Activated naive CD4-positive, alpha-beta T cell treated with anti-CD3 and anti-CD28 coated beads for 36 hours (primary cell): ENCODE measurements at regions of chr11 and their contacts with region 1.

Region 1: DNA sequence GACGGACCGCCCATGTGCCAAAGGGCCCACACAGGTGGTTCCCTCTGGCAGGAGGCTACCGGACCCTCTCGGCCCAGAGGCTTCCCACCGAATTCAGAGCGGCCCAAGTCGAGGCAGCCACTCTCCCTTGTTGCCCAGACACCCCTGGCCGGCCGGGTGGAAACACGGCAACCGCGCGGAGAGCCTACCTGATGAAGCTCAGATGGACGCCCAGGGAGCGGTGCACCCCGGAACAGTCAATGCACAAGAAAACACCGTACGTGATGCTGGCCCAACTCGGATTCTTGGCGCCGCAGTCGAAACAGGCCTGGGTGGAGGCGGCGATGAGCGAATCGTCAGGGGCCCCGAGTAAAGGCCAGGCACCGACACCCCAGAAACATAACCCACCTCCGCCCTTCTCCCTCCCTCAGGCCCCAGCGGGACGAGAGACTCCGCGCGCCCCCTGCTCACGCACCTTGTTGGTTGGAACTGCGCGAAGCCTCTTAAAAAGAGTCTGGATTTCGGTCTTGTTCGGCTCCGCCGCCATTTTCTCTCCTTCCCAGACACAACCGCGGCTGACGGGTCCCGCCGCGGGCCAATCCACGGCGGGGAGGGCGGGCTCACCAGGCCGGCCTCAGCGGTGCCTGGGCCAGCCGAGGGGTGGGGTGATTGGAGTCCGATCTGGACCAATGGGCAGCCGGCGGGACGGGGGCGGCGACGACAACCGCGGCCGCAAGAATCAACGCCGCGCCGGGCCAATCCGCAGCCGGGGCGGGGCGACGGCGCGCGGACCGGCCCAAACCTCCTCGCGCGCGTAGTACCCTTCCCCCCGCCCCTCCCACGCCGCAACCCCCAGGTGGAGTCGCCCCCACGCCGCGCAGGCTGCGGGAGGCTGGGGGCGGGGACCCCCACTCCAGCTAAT is at the start of gene ARFGAP2:
- DNase-seq: peak; percentile 97
- H3K4me3 Mint-ChIP-seq: peak within 1 kb of the TSS; percentile 97
- H3K27ac Mint-ChIP-seq: peak within 1 kb of the TSS; percentile 99
- H3K4me1 Mint-ChIP-seq: peaks cover 41% of the 10 kb centered on the region
- H3K27me3 Mint-ChIP-seq: no peaks in the 10 kb centered on the region
- total RNA-seq, gene ARFGAP2: 75.1 to 78.7 TPM

Region 2: GRCh38 chr11:46845740-46846509 is 330.7 kb before region 1 on chr11 and contains the start of gene CKAP5:
- CTCF ChIA-PET with region 1: no interaction called
- intact Hi-C with region 1: loop called (anchors 1 kb)
- DNase-seq: peak; percentile 91
- H3K4me3 Mint-ChIP-seq: peak within 1 kb of the TSS; percentile 95
- H3K27ac Mint-ChIP-seq: peak within 1 kb of the TSS; percentile 91
- H3K4me1 Mint-ChIP-seq: peaks cover 33% of the 10 kb centered on the region
- H3K27me3 Mint-ChIP-seq: no peaks in the 10 kb centered on the region
- total RNA-seq, gene CKAP5: 205 to 216 TPM

Region 3: DNA sequence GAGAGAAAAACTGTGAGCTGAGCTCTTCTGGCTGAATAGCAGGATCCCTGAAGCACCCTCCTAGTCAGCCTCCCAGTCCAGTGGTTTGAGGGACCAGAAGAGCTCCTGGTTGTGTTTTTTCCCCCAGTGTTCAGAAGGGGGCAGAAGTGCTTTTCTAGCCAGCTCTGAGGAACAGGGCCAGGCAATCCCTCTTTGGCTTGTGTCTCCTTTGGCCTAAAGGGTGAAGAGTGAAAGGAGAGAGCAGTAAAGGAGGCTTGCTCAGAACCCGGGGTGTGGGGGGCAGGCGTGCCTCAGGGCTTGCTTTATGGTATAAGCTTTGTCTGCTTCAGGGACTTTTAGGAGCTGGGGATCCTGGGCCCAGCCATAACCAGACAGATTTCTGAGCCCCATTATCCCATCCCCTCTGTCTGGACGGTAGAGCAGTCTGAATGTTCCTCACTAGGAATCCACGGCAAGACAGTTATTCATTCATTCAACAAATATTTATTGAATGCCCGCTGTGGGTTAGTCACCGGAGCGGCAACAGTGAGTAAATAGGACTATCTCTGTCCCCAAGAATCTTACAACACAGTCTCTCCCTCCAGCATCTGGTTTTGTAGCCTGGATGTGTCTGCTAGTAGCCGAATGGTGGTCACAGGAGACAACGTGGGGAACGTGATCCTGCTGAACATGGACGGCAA is 57.6 kb after region 1 on chr11:
- CTCF ChIA-PET with region 1: interaction called, 15 read pairs
- intact Hi-C with region 1: loop called (anchors 1 kb)
- DNase-seq: peak; percentile 38
- H3K4me3 Mint-ChIP-seq: peak overlapping the region; percentile 3
- H3K27ac Mint-ChIP-seq: peak overlapping the region; percentile 77
- H3K4me1 Mint-ChIP-seq: peaks cover 30% of the 10 kb centered on the region
- H3K27me3 Mint-ChIP-seq: no peaks in the 10 kb centered on the region

Region 4: DNA sequence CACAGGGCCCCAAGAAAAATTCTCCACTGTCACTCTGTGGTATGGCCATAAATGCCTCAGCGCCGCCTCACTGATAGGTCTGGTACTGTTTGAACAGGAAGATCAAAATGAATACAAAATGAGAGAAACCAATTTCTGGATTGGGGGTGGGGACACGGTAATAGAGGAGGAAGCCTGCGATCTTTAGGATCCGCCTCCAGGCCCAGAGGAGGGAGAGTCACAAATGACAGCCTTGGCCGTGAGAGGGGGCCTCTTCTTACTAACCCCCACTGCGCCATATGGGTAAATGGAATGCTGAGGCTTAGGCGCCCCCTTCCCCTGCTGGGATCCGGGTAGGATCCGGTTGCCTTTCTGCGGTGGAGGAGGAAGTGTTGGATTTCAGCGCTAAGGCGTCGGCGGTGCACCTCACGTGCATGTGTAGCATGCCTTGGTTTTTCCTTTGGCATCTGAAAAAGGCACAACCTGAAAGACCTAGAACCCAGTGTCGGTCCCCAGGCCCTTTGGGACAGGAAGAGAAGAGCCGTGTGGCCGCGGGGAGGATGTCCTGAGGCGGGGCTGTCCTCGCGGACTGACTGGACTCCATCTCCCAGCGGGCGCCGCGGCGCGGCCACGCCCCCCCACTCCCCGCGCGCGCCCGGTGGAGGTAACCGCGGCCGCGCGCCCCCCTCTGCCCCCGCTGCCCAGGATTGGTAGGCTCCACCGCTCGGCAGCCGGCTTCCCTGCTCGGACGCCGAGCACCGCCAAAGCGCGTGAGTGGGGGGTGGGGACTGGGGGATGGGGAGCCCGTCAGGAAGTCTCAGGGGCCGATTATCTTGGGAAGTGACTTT is 92.6 kb after region 1 on chr11:
- CTCF ChIA-PET with region 1: interaction called, 4 read pairs
- intact Hi-C with region 1: loop called (anchors 1 kb)
- DNase-seq: peak; percentile 91
- H3K4me3 Mint-ChIP-seq: peak overlapping the region; percentile 85
- H3K27ac Mint-ChIP-seq: peak overlapping the region; percentile 98
- H3K4me1 Mint-ChIP-seq: peaks cover 55% of the 10 kb centered on the region
- H3K27me3 Mint-ChIP-seq: no peaks in the 10 kb centered on the region

Region 5: DNA sequence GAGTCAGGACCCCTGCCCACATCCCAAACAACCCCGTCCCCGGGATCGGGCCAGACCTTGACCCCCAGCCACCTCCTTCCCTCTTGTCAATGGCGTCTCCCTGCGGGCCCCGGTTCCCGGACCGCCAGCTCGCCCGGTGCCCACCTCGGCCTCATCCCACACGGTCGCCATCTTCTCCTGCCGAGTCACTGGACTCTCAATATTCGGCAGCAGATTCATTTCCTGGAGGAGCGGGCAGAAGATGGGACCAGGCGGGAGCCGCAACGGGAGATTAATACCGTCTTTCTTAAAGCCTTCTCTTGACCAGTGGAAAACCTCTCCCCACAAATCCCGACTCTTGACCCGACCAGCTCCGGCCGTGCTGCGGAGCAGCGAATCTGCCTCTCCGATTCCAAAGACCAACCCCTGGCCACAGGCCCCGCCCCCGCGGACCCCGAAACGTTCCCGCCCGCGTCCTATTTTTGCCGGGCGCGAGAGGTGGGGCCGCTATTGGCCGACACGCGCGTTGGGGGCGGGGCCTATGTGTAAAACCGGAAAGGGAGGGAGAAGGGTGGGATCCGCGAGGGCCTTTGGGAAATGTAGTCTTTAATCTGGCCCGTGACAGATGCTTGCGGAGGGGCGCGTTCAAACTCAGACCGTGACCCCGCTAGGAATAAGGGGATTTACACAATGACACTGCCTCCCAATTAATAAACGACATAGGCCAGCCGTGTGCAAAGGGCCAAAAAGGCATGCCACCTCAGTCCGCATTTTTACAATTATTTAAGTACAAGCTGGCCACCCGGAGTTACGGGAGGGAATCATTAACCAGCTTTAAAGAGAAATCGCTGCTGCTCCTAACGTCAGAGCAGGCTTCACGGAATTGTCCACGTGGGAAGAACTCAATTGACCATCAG is 249.7 kb after region 1 on chr11 and contains the start of gene PSMC3:
- CTCF ChIA-PET with region 1: no interaction called
- intact Hi-C with region 1: loop called (anchors 1 kb)
- DNase-seq: peak; percentile 99
- H3K4me3 Mint-ChIP-seq: peak within 1 kb of the TSS; percentile 98
- H3K27ac Mint-ChIP-seq: peak within 1 kb of the TSS; percentile 98
- H3K4me1 Mint-ChIP-seq: peaks cover 26% of the 10 kb centered on the region
- H3K27me3 Mint-ChIP-seq: no peaks in the 10 kb centered on the region
- total RNA-seq, gene PSMC3: 127 to 129 TPM

Region 6: DNA sequence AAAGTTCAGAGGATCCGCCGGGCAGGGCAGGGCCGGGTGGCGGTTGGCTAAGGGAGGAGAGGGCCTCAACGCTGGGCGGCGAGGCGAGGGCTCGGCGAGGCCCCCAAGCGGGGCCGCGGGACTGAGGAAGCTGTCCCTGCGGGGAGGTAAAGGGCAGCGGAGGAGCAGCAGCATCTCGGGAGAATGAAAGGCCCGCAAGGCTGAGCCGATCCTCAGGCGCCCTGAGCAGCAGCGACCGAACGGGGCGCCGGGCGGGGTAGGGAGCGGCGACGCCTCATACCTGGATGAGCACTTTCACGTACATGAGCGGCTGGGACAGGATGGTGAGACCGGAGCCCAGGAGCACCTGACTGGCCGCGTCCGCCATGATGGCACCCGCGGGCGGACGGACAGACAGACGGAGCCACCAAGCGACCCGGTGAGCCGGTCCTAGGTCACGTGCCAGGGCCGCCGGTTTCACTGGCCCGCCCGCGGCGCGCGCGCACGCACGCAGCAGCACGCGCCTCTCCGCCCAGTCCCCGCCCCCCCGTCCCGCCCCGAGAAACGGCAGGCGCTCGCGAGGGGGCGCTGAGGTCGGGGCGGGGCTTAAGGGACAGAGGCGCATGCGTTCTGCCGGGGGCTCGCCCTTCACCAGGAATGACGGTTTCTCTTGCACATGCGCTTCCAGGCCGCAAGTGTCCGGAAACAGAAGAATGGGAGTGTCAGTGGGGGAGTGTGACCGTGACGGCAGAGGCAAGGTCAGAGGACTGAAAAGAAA is 465.7 kb after region 1 on chr11 and contains the start of gene MTCH2:
- CTCF ChIA-PET with region 1: no interaction called
- intact Hi-C with region 1: loop called (anchors 1 kb)
- DNase-seq: peak; percentile 97
- H3K4me3 Mint-ChIP-seq: peak within 1 kb of the TSS; percentile 91
- H3K27ac Mint-ChIP-seq: peak within 1 kb of the TSS; percentile 81
- H3K4me1 Mint-ChIP-seq: peaks cover 19% of the 10 kb centered on the region
- H3K27me3 Mint-ChIP-seq: no peaks in the 10 kb centered on the region
- total RNA-seq, gene MTCH2: 93.7 to 95.1 TPM